CD14-positive monocyte (primary cell): ENCODE measurements at regions of chr9 and their contacts with region 1.

Region 1: GRCh38 chr9:131762356-131762932 is 22.6 kb upstream of the RAPGEF1 start:
- DNase-seq: peak; percentile 59 to 72 (median 62)
- H3K4me3 ChIP-seq: no peak overlapping the region
- H3K4me3 Mint-ChIP-seq: peak overlapping the region in 1 of 2 donors; percentile 39
- H3K27ac ChIP-seq: no peak overlapping the region
- H3K27ac Mint-ChIP-seq: peak overlapping the region in 1 of 7 donors; percentile 62
- H3K4me1 ChIP-seq: no peaks in the 10 kb centered on the region
- H3K4me1 Mint-ChIP-seq: no peaks in the 10 kb centered on the region
- H3K27me3 ChIP-seq: no peaks in the 10 kb centered on the region
- H3K27me3 Mint-ChIP-seq: peaks cover 7 to 25% (median 18%) of the 10 kb centered on the region in 3 donors
- CTCF ChIP-seq: peak; percentile 96

Region 2: GRCh38 chr9:132069046-132069898 is 306.8 kb after region 1 on chr9:
- intact Hi-C with region 1: no loop called
- DNase-seq: no peak
- H3K4me3 ChIP-seq: no peak overlapping the region
- H3K4me3 Mint-ChIP-seq: no peak overlapping the region
- H3K27ac ChIP-seq: no peak overlapping the region
- H3K27ac Mint-ChIP-seq: no peak overlapping the region
- H3K4me1 ChIP-seq: no peaks in the 10 kb centered on the region
- H3K4me1 Mint-ChIP-seq: no peaks in the 10 kb centered on the region
- H3K27me3 ChIP-seq: no peaks in the 10 kb centered on the region
- H3K27me3 Mint-ChIP-seq: peaks cover 0 to 3% (median 0%) of the 10 kb centered on the region in 3 donors
- CTCF ChIP-seq: no peak

Region 3: GRCh38 chr9:132249123-132249522 is 486.7 kb after region 1 on chr9:
- intact Hi-C with region 1: loop called (anchors 2 to 5 kb)
- DNase-seq: no peak
- H3K4me3 ChIP-seq: no peak overlapping the region
- H3K4me3 Mint-ChIP-seq: no peak overlapping the region
- H3K27ac ChIP-seq: no peak overlapping the region
- H3K27ac Mint-ChIP-seq: no peak overlapping the region
- H3K4me1 ChIP-seq: no peaks in the 10 kb centered on the region
- H3K4me1 Mint-ChIP-seq: peaks cover 2% of the 10 kb centered on the region
- H3K27me3 ChIP-seq: peaks cover 2 to 23% of the 10 kb centered on the region in 2 donors
- H3K27me3 Mint-ChIP-seq: peaks cover 17 to 46% (median 32%) of the 10 kb centered on the region in 3 donors
- CTCF ChIP-seq: no peak

Region 4: GRCh38 chr9:132260846-132261245 is 498.4 kb after region 1 on chr9:
- intact Hi-C with region 1: loop called (anchors 2 to 5 kb)
- DNase-seq: no peak
- H3K4me3 ChIP-seq: no peak overlapping the region
- H3K4me3 Mint-ChIP-seq: no peak overlapping the region
- H3K27ac ChIP-seq: no peak overlapping the region
- H3K27ac Mint-ChIP-seq: no peak overlapping the region
- H3K4me1 ChIP-seq: peaks cover 0 to 4% of the 10 kb centered on the region in 2 donors
- H3K4me1 Mint-ChIP-seq: peaks cover 6% of the 10 kb centered on the region
- H3K27me3 ChIP-seq: no peaks in the 10 kb centered on the region
- H3K27me3 Mint-ChIP-seq: no peaks in the 10 kb centered on the region
- CTCF ChIP-seq: no peak

Region 5: GRCh38 chr9:132268725-132269352 is 506.4 kb after region 1 on chr9:
- intact Hi-C with region 1: loop called (anchors 1 to 5 kb)
- DNase-seq: peak; percentile 41 to 54 (median 52)
- H3K4me3 ChIP-seq: no peak overlapping the region
- H3K4me3 Mint-ChIP-seq: no peak overlapping the region
- H3K27ac ChIP-seq: no peak overlapping the region
- H3K27ac Mint-ChIP-seq: peak overlapping the region in 1 of 7 donors; percentile 73
- H3K4me1 ChIP-seq: no peaks in the 10 kb centered on the region
- H3K4me1 Mint-ChIP-seq: no peaks in the 10 kb centered on the region
- H3K27me3 ChIP-seq: no peaks in the 10 kb centered on the region
- H3K27me3 Mint-ChIP-seq: peaks cover 0 to 2% (median 0%) of the 10 kb centered on the region in 3 donors
- CTCF ChIP-seq: peak; percentile 96